Activated CD4-positive, alpha-beta memory T cell treated with anti-CD3 and anti-CD28 coated beads for 36 hours (primary cell): ENCODE measurements at regions of chr5 and their contacts with region 1.

Region 1: GRCh38 chr5:36241631-36242533 is at the start of gene NADK2:
- DNase-seq: peak; percentile 96
- H3K4me3 Mint-ChIP-seq: peak within 1 kb of the TSS; percentile 80
- H3K27ac Mint-ChIP-seq: peak within 1 kb of the TSS; percentile 86
- H3K4me1 Mint-ChIP-seq: peaks cover 44% of the 10 kb centered on the region
- H3K27me3 Mint-ChIP-seq: no peaks in the 10 kb centered on the region
- total RNA-seq, gene NADK2: 16.6 to 18.0 TPM

Region 2: GRCh38 chr5:36079200-36079761 is 162.6 kb before region 1 on chr5:
- CTCF ChIA-PET with region 1: interaction called, 4 read pairs
- POLR2A ChIA-PET with region 1: no interaction called
- intact Hi-C with region 1: loop called (anchors 10 kb)
- DNase-seq: no peak
- H3K4me3 Mint-ChIP-seq: no peak overlapping the region
- H3K27ac Mint-ChIP-seq: no peak overlapping the region
- H3K4me1 Mint-ChIP-seq: peaks cover 3% of the 10 kb centered on the region
- H3K27me3 Mint-ChIP-seq: peaks cover 25% of the 10 kb centered on the region

Region 3: DNA sequence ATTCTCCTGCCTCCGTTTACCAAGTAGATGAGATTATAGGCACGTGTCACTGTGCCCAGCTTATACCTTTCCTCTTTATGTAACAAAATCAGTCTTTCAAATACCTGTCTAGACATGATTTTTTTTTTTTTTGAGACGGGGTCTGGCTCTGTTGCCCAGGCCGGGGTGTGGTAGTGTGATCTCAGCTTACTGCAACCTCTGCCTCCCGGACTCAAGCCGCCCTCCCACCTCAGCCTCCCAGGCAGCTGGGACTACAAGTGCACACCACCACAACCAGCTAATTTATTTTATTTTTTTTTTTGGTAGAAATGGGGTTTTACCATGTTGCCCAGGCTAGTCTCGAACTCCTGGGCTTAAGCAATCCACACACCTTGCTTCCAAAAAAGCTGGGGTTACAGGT is 13.4 kb before region 1 on chr5:
- CTCF ChIA-PET with region 1: interaction called, 10 read pairs
- POLR2A ChIA-PET with region 1: interaction called, 3 read pairs
- intact Hi-C with region 1: no loop called
- DNase-seq: no peak
- H3K4me3 Mint-ChIP-seq: no peak overlapping the region
- H3K27ac Mint-ChIP-seq: no peak overlapping the region
- H3K4me1 Mint-ChIP-seq: no peaks in the 10 kb centered on the region
- H3K27me3 Mint-ChIP-seq: no peaks in the 10 kb centered on the region

Region 4: GRCh38 chr5:36323926-36324781 is 82.3 kb after region 1 on chr5:
- CTCF ChIA-PET with region 1: no interaction called
- POLR2A ChIA-PET with region 1: no interaction called
- intact Hi-C with region 1: no loop called
- DNase-seq: no peak
- H3K4me3 Mint-ChIP-seq: no peak overlapping the region
- H3K27ac Mint-ChIP-seq: no peak overlapping the region
- H3K4me1 Mint-ChIP-seq: no peaks in the 10 kb centered on the region
- H3K27me3 Mint-ChIP-seq: peaks cover 5% of the 10 kb centered on the region

Region 5: DNA sequence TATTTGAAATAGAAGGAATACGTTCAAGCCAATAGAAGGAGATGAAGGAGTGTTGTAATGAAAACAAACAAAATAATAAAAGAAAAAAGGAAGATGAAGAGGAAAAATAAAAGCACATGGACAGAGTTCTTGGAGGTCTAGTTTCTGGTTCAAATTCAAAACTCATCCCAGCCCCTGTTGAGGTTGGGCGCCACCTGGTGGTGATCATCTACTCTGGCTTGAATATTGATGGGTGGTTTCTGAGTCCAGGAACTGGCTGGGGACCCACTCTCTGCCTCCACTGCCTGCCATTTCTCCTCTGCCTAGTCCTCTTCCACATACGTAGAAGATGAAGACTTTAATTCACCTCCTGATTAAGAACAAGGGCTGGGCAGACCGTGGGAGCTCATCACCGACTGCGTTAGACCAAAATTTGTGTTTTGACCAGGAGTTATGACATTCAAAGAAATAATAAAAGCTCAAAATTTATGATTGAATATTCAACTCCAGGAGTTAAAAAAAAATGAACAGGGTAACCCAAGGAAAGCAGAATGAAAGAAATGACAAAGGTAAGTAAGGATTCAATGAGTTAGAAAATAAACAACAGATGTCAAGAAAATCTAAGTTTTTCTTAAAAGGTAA is 265.6 kb after region 1 on chr5:
- CTCF ChIA-PET with region 1: interaction called, 8 read pairs
- POLR2A ChIA-PET with region 1: no interaction called
- intact Hi-C with region 1: loop called (anchors 1 kb)
- DNase-seq: peak; percentile 78
- H3K4me3 Mint-ChIP-seq: no peak overlapping the region
- H3K27ac Mint-ChIP-seq: no peak overlapping the region
- H3K4me1 Mint-ChIP-seq: no peaks in the 10 kb centered on the region
- H3K27me3 Mint-ChIP-seq: no peaks in the 10 kb centered on the region

Region 6: GRCh38 chr5:36703245-36703860 is 461.5 kb after region 1 on chr5:
- CTCF ChIA-PET with region 1: no interaction called
- POLR2A ChIA-PET with region 1: no interaction called
- intact Hi-C with region 1: no loop called
- DNase-seq: no peak
- H3K4me3 Mint-ChIP-seq: no peak overlapping the region
- H3K27ac Mint-ChIP-seq: no peak overlapping the region
- H3K4me1 Mint-ChIP-seq: no peaks in the 10 kb centered on the region
- H3K27me3 Mint-ChIP-seq: peaks cover 13% of the 10 kb centered on the region

Region 7: GRCh38 chr5:37370864-37371726 is 1129.2 kb after region 1 on chr5 and contains the start of gene NUP155:
- CTCF ChIA-PET with region 1: no interaction called
- POLR2A ChIA-PET with region 1: no interaction called
- intact Hi-C with region 1: loop called (anchors 10 kb)
- DNase-seq: peak; percentile 94
- H3K4me3 Mint-ChIP-seq: peak within 1 kb of the TSS; percentile 94
- H3K27ac Mint-ChIP-seq: peak within 1 kb of the TSS; percentile 90
- H3K4me1 Mint-ChIP-seq: peaks cover 24% of the 10 kb centered on the region
- H3K27me3 Mint-ChIP-seq: no peaks in the 10 kb centered on the region
- total RNA-seq, gene NUP155: 74.6 to 75.6 TPM